ENCODE measurements at regions of chr4 and their contacts with region 1.

Region 1: DNA sequence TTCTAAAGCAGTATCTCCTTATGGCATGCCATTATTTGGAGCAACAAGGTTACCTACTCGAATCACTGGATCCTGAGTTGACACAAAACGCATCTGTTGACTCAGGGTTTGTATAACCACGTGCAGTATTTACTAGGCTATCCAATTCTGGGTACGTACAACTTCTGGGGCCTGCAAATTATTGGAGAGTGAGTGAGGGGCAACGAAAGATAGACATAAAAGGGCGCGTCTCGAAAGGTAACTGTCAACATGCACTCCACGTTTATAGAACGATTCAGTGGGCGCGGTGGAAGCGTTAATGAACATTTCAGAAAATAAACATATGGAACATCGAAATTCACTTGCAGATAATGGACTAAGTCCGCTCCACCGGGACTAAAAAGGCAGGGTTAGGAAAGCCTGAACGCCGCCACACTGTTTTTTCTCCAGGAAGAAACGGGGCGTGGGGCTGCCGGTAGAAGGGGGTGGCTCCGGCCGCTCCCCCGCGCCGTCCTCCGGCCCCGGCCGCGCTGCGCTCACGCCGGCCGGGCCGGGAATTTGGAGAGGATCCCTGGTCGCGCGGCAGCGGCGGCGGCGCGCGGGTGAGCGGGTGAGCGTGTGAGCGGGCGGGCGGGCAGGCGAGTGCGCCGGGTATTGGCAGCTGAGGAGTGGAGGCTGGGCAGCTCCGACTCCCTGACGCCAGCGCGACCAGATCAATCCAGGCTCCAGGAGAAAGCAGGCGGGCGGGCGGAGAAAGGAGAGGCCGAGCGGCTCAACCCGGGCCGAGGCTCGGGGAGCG is at the start of gene SMAD1:
- DNase-seq: peak; percentile 76
- H3K4me3 ChIP-seq: peak within 1 kb of the TSS; percentile 82 to 99 (median 98)
- H3K27ac ChIP-seq: peak within 1 kb of the TSS; percentile 60
- H3K4me1 ChIP-seq: peaks cover 18% of the 10 kb centered on the region
- H3K27me3 ChIP-seq: no peaks in the 10 kb centered on the region
- CTCF ChIP-seq: no peak
- POLR2A ChIP-seq: peak; percentile 59
- total RNA-seq, gene SMAD1: 93.5 and 101 TPM in 2 replicates

Region 2: GRCh38 chr4:145154573-145154972 is 326.8 kb before region 1 on chr4:
- CTCF ChIA-PET with region 1: no interaction called
- POLR2A ChIA-PET with region 1: no interaction called
- dilution Hi-C with region 1: no loop called
- intact Hi-C with region 1: loop called (anchors 2 kb)
- DNase-seq: peak; percentile 73
- H3K4me3 ChIP-seq: no peak overlapping the region
- H3K27ac ChIP-seq: peak overlapping the region; percentile 46
- H3K4me1 ChIP-seq: peaks cover 28% of the 10 kb centered on the region
- H3K27me3 ChIP-seq: no peaks in the 10 kb centered on the region
- CTCF ChIP-seq: peak; percentile 53 to 66
- POLR2A ChIP-seq: no peak

Region 3: DNA sequence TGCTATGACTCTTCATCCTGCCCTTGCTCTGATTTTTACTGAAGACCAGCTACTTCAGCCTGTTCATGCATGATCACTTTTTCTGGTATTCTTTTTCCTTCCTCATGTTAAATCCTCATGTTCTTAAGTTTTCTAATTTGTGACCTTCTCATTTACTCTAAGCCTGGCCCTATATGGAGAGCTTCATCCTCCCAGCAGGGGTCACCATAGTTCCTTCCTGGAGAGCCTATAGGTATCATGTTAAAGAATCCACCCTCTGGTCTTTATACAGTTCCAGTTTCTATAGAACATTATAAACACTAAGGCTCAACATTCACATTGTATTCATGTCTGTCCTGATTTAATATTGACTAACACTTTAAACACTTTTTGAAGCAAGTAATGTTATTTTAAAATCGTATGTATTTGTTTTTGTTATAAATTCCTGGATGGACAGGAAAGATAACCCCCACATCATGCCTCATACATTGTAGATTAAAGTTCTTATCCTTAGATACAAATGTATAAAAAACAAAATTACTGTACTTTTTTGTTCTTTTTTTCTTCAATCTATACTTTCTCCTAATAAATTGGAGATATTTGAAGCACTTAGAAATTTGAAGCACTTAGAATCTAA is 247.2 kb before region 1 on chr4:
- CTCF ChIA-PET with region 1: interaction called, 8 read pairs
- POLR2A ChIA-PET with region 1: interaction called, 6 read pairs
- dilution Hi-C with region 1: no loop called
- intact Hi-C with region 1: loop called (anchors 1 kb)
- DNase-seq: peak; percentile 65
- H3K4me3 ChIP-seq: no peak overlapping the region
- H3K27ac ChIP-seq: no peak overlapping the region
- H3K4me1 ChIP-seq: peaks cover 8% of the 10 kb centered on the region
- H3K27me3 ChIP-seq: no peaks in the 10 kb centered on the region
- CTCF ChIP-seq: peak; percentile 60 to 62
- POLR2A ChIP-seq: no peak

Region 4: GRCh38 chr4:145420595-145421214 is 60.6 kb before region 1 on chr4:
- CTCF ChIA-PET with region 1: no interaction called
- POLR2A ChIA-PET with region 1: no interaction called
- dilution Hi-C with region 1: no loop called
- intact Hi-C with region 1: no loop called
- DNase-seq: no peak
- H3K4me3 ChIP-seq: no peak overlapping the region
- H3K27ac ChIP-seq: no peak overlapping the region
- H3K4me1 ChIP-seq: no peaks in the 10 kb centered on the region
- H3K27me3 ChIP-seq: peaks cover 0 to 4% of the 10 kb centered on the region in 2 experiments
- CTCF ChIP-seq: no peak
- POLR2A ChIP-seq: no peak

Region 5: GRCh38 chr4:145452447-145453162 is 28.7 kb before region 1 on chr4:
- CTCF ChIA-PET with region 1: no interaction called
- POLR2A ChIA-PET with region 1: no interaction called
- dilution Hi-C with region 1: no loop called
- intact Hi-C with region 1: loop called (anchors 2 kb)
- DNase-seq: peak; percentile 55
- H3K4me3 ChIP-seq: no peak overlapping the region
- H3K27ac ChIP-seq: peak overlapping the region; percentile 45
- H3K4me1 ChIP-seq: peaks cover 20% of the 10 kb centered on the region
- H3K27me3 ChIP-seq: peaks cover 0 to 4% of the 10 kb centered on the region in 2 experiments
- CTCF ChIP-seq: no peak
- POLR2A ChIP-seq: no peak

Region 6: DNA sequence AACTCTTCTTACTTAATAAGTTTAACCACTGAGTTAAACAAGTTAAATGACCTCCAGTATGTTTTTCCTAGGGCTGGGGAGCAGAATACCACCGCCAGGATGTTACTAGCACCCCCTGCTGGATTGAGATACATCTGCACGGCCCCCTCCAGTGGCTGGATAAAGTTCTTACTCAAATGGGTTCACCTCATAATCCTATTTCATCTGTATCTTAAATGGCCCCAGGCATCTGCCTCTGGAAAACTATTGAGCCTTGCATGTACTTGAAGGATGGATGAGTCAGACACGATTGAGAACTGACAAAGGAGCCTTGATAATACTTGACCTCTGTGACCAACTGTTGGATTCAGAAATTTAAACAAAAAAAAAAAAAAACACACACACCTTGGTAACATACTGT is 76.4 kb after region 1 on chr4:
- CTCF ChIA-PET with region 1: interaction called, 11 read pairs
- POLR2A ChIA-PET with region 1: no interaction called
- dilution Hi-C with region 1: no loop called
- intact Hi-C with region 1: loop called (anchors 1 kb)
- DNase-seq: peak; percentile 81
- H3K4me3 ChIP-seq: no peak overlapping the region
- H3K27ac ChIP-seq: no peak overlapping the region
- H3K4me1 ChIP-seq: peaks cover 11% of the 10 kb centered on the region
- H3K27me3 ChIP-seq: no peaks in the 10 kb centered on the region
- CTCF ChIP-seq: peak; percentile 88 to 89
- POLR2A ChIP-seq: no peak

Measured in endothelial cell of umbilical vein (primary cell).